Endothelial cell of umbilical vein (primary cell): ENCODE measurements at regions of chr18 and their contacts with region 1.

Region 1: GRCh38 chr18:42053188-42053781 is 98.3 kb downstream of the PIK3C3 start:
- DNase-seq: peak; percentile 66
- H3K4me3 ChIP-seq: no peak overlapping the region
- H3K27ac ChIP-seq: no peak overlapping the region
- H3K4me1 ChIP-seq: peaks cover 5% of the 10 kb centered on the region
- H3K27me3 ChIP-seq: no peaks in the 10 kb centered on the region
- CTCF ChIP-seq: peak; percentile 63 to 67
- POLR2A ChIP-seq: no peak

Region 2: DNA sequence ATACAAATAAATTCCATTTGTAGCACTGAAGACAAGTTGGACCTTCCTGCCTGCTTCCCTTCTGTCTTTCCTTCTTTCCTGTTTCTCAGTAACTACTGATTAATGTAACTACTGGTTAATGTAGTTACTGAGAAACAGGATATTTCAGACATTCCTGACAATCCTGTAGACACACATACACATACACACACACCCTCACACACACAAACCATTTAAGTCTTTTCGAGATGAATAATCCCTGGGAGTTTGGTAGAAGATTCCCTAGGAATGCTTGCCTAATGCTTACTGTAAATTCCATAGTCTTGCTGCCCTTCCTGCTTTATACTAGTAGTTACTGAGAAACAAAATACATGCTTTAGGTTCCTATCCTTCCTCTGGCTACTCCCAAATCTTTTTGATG is 14.3 kb before region 1 on chr18:
- CTCF ChIA-PET with region 1: interaction called, 21 read pairs
- POLR2A ChIA-PET with region 1: no interaction called
- dilution Hi-C with region 1: no loop called
- intact Hi-C with region 1: no loop called
- DNase-seq: peak; percentile 76
- H3K4me3 ChIP-seq: no peak overlapping the region
- H3K27ac ChIP-seq: no peak overlapping the region
- H3K4me1 ChIP-seq: peaks cover 4% of the 10 kb centered on the region
- H3K27me3 ChIP-seq: no peaks in the 10 kb centered on the region
- CTCF ChIP-seq: no peak
- POLR2A ChIP-seq: no peak

Region 3: GRCh38 chr18:42086288-42086687 is 33.0 kb after region 1 on chr18:
- CTCF ChIA-PET with region 1: interaction called, 14 read pairs
- POLR2A ChIA-PET with region 1: no interaction called
- dilution Hi-C with region 1: no loop called
- intact Hi-C with region 1: no loop called
- DNase-seq: peak; percentile 43
- H3K4me3 ChIP-seq: no peak overlapping the region
- H3K27ac ChIP-seq: peak overlapping the region; percentile 17
- H3K4me1 ChIP-seq: peaks cover 14% of the 10 kb centered on the region
- H3K27me3 ChIP-seq: no peaks in the 10 kb centered on the region
- CTCF ChIP-seq: no peak
- POLR2A ChIP-seq: no peak

Region 4: GRCh38 chr18:42164556-42164955 is 111.3 kb after region 1 on chr18:
- CTCF ChIA-PET with region 1: no interaction called
- POLR2A ChIA-PET with region 1: no interaction called
- dilution Hi-C with region 1: no loop called
- intact Hi-C with region 1: no loop called
- DNase-seq: no peak
- H3K4me3 ChIP-seq: no peak overlapping the region
- H3K27ac ChIP-seq: no peak overlapping the region
- H3K4me1 ChIP-seq: no peaks in the 10 kb centered on the region
- H3K27me3 ChIP-seq: no peaks in the 10 kb centered on the region
- CTCF ChIP-seq: no peak
- POLR2A ChIP-seq: no peak

Region 5: DNA sequence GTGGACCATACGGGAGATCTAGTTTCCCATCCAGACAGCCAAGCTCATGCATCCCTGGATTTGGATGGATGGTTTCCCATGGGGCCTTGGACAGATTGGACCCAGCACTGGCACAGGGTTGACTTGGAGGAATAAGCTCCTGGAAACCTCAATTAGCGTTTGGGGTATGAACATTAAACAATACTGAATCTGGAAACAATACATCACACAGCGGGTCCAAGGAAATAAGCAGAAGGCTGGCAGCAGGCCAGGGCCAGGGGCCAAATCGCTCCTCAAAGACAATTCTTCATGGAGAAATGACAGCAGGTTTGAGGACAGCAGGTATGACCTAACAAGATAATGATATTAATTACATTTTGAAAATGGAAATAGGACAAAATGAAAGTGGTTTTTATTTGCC is 521.6 kb after region 1 on chr18:
- CTCF ChIA-PET with region 1: no interaction called
- POLR2A ChIA-PET with region 1: no interaction called
- dilution Hi-C with region 1: no loop called
- intact Hi-C with region 1: no loop called
- DNase-seq: no peak
- H3K4me3 ChIP-seq: no peak overlapping the region
- H3K27ac ChIP-seq: no peak overlapping the region
- H3K4me1 ChIP-seq: no peaks in the 10 kb centered on the region
- H3K27me3 ChIP-seq: no peaks in the 10 kb centered on the region
- CTCF ChIP-seq: no peak
- POLR2A ChIP-seq: no peak

Region 6: GRCh38 chr18:42586601-42587000 is 533.3 kb after region 1 on chr18:
- CTCF ChIA-PET with region 1: no interaction called
- POLR2A ChIA-PET with region 1: no interaction called
- dilution Hi-C with region 1: no loop called
- intact Hi-C with region 1: loop called (anchors 10 kb)
- DNase-seq: no peak
- H3K4me3 ChIP-seq: no peak overlapping the region
- H3K27ac ChIP-seq: no peak overlapping the region
- H3K4me1 ChIP-seq: no peaks in the 10 kb centered on the region
- H3K27me3 ChIP-seq: no peaks in the 10 kb centered on the region
- CTCF ChIP-seq: no peak
- POLR2A ChIP-seq: no peak

Region 7: DNA sequence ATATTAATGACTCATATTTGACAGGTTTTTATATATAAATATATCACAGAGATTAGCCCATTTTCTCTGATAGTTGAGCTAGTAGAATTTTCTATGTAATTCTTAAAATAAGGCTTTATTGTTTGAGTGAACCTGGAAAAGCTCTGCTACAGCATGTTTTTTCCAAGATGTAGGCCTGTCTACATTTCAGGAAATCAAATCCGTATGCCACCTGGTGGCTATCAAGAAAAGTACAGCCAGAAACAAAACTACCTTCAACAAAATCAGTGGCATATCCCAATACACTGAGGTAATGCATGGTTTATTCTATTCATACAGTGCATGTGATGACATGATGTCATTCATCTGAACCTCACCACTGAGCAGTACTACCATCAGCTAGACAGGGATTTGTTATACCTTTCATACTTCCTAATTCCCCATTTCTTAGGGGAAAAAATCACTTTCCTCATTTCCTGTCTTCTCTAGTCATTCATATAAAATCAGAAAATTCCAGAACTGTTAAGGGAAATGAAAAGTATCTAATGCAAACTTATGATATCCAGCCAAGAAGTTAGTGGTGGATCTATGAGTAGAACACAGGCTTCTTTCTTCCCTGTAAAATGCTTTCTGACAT is 1534.4 kb after region 1 on chr18:
- CTCF ChIA-PET with region 1: interaction called, 11 read pairs
- POLR2A ChIA-PET with region 1: no interaction called
- dilution Hi-C with region 1: no loop called
- intact Hi-C with region 1: loop called (anchors 2 kb)
- DNase-seq: peak; percentile 43
- H3K4me3 ChIP-seq: no peak overlapping the region
- H3K27ac ChIP-seq: no peak overlapping the region
- H3K4me1 ChIP-seq: no peaks in the 10 kb centered on the region
- H3K27me3 ChIP-seq: no peaks in the 10 kb centered on the region
- CTCF ChIP-seq: peak; percentile 44 to 56
- POLR2A ChIP-seq: no peak